Caco-2 (cell line): ENCODE measurements at regions of chr10 and their contacts with region 1.

Region 1: DNA sequence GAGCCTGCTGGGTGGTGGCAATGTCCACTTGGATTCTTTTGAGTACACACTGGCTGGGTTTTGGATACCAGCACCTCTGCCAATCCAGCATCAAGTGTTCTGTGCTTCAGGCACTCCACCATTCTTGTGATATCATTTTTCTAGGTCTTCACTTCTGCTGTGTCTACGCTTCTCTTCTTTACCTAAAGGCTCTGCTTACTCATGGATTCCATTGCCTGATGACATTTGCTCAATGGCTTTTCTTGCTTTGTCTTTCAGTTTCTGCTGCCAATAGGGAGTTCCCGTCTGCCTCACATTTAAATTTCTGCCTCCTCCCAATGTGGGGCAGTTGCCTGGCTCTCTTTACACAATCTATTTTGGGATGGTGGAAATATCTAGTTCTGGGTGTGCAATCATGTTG is 12.7 kb upstream of the PAPSS2 start:
- DNase-seq: peak in 1 of 2 experiments; percentile 20
- H3K4me3 ChIP-seq: no peak overlapping the region
- H3K4me3 Mint-ChIP-seq: peak overlapping the region; percentile 29
- H3K27ac Mint-ChIP-seq: peak overlapping the region; percentile 38
- H3K4me1 ChIP-seq: peaks cover 25% of the 10 kb centered on the region
- H3K4me1 Mint-ChIP-seq: peaks cover 39% of the 10 kb centered on the region
- H3K27me3 ChIP-seq: no peaks in the 10 kb centered on the region
- H3K27me3 Mint-ChIP-seq: no peaks in the 10 kb centered on the region
- CTCF ChIP-seq: no peak

Region 2: GRCh38 chr10:87585565-87586514 is 61.1 kb before region 1 on chr10:
- CTCF ChIA-PET with region 1: no interaction called
- POLR2A ChIA-PET with region 1: no interaction called
- intact Hi-C with region 1: loop called (anchors 2 kb)
- DNase-seq: peak; percentile 43 to 52
- H3K4me3 ChIP-seq: 0 out of 2 replicates have a peak overlapping the region, but pooled peaks have one; percentile 0
- H3K4me3 Mint-ChIP-seq: peak overlapping the region; percentile 38
- H3K27ac Mint-ChIP-seq: peak overlapping the region; percentile 19
- H3K4me1 ChIP-seq: peaks cover 31% of the 10 kb centered on the region
- H3K4me1 Mint-ChIP-seq: peaks cover 27% of the 10 kb centered on the region
- H3K27me3 ChIP-seq: no peaks in the 10 kb centered on the region
- H3K27me3 Mint-ChIP-seq: no peaks in the 10 kb centered on the region
- CTCF ChIP-seq: no peak

Region 3: DNA sequence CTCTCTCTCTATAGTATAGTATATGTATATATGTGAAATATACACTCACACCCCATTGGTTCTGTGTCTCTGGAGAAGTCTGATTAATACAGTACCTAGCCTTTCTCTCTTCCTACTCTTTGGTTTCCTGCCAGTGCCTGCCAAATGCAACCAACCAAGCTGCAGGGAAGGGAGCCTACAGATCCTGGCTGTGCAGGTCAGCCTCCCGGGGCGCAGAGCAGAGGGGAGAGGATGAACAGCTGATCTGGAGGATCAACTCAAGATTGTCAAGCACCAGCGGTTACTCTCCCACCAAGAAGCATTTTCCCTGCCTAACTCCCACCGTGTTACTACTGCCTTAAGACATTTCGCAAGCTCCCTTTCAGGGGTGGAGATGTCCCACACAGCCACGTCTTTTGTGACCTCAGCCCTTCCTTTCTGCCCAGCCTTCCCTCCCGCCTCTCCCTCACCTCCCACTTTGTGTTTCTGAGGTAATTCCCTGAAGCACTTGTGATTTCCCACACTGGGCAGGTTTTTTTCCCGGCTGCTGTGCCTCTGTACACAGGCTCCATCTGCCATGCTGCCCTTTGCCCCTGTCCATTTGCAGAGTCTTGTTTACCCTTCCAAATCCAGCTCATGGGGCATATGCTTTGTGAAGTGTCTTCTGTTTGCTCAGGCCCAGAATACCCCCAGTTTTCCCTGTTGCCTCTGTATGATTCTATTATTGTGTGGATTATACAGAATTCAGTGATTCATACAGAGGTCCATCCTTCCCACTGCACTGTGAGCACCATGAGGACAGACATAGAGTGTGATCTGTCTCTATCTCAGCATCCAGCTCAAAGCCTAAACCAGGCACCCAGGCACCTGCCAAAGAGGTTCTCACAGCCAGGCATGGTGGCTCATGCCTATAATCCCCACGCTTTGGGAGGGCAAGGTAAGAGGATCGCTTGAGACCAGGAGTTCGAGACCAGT is 28.2 kb before region 1 on chr10:
- CTCF ChIA-PET with region 1: no interaction called
- POLR2A ChIA-PET with region 1: no interaction called
- intact Hi-C with region 1: loop called (anchors 1 kb)
- DNase-seq: peak; percentile 68 to 83
- H3K4me3 ChIP-seq: no peak overlapping the region
- H3K4me3 Mint-ChIP-seq: peak overlapping the region; percentile 53
- H3K27ac Mint-ChIP-seq: peak overlapping the region; percentile 89
- H3K4me1 ChIP-seq: peaks cover 21% of the 10 kb centered on the region
- H3K4me1 Mint-ChIP-seq: peaks cover 21% of the 10 kb centered on the region
- H3K27me3 ChIP-seq: no peaks in the 10 kb centered on the region
- H3K27me3 Mint-ChIP-seq: no peaks in the 10 kb centered on the region
- CTCF ChIP-seq: no peak

Region 4: GRCh38 chr10:87635610-87636312 is 11.2 kb before region 1 on chr10:
- CTCF ChIA-PET with region 1: no interaction called
- POLR2A ChIA-PET with region 1: no interaction called
- intact Hi-C with region 1: no loop called
- DNase-seq: no peak
- H3K4me3 ChIP-seq: no peak overlapping the region
- H3K4me3 Mint-ChIP-seq: no peak overlapping the region
- H3K27ac Mint-ChIP-seq: no peak overlapping the region
- H3K4me1 ChIP-seq: peaks cover 15% of the 10 kb centered on the region; the same call in 1 of the 2 replicates
- H3K4me1 Mint-ChIP-seq: no peaks in the 10 kb centered on the region
- H3K27me3 ChIP-seq: no peaks in the 10 kb centered on the region
- H3K27me3 Mint-ChIP-seq: no peaks in the 10 kb centered on the region
- CTCF ChIP-seq: no peak